Dorsolateral prefrontal cortex (tissue), 120 donors: ENCODE measurements at regions of chr1 and their contacts with region 1.

Region 1: DNA sequence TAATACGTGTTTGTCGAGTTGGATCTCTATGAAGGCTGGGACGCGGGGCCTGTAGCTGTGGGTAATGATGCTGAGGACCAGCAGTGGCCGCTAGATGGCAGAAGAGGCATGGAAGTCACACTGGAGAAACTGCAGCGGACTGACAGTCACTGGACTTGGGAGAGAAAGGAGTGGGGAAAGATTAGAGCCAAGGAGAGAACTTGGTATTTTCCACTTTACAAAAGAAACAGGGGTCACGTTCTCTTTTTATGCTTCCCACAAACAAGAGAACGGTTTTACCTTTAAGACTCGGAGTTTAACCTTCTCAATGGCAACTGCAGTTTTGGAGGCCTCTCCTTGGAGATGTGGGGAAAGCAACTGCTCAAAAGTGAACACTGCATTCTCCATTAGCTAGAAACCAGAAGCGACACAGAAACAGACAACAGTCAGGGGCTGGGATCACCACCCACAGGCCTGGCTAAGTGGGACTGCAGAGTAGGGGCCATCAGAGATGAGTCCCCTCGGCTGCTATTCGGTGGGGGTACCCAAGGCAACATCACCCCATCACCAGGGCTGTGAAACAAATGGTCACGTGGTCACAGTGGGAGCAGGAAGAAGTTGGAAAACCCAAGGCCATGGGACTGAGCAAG is 51.1 kb upstream of the EDEM3 start:
- DNase-seq: peak; percentile 83 to 95 (median 90)
- H3K4me3 ChIP-seq: no peak overlapping the region
- H3K27ac ChIP-seq: peak overlapping the region in 1 of 59 donors; percentile 8
- H3K27me3 ChIP-seq: peaks cover 0 to 4% (median 0%) of the 10 kb centered on the region in 45 donors
- CTCF ChIP-seq: peak; percentile 79 to 99 (median 92)

Region 2: GRCh38 chr1:184973272-184974055 is 167.7 kb after region 1 on chr1:
- intact Hi-C with region 1: loop called in 1 of 2 experiments (anchors 2 kb)
- DNase-seq: peak in 2 of 10 donors; percentile 5 to 8
- H3K4me3 ChIP-seq: peak overlapping the region; percentile 36 to 77 (median 62)
- H3K27ac ChIP-seq: peak overlapping the region in 15 of 59 donors; percentile 4 to 81 (median 31)
- H3K27me3 ChIP-seq: peaks cover 0 to 56% (median 28%) of the 10 kb centered on the region in 45 donors
- CTCF ChIP-seq: no peak

Region 3: GRCh38 chr1:184982002-184982954 is 176.5 kb after region 1 on chr1:
- intact Hi-C with region 1: loop called in 1 of 2 experiments (anchors 1 kb)
- DNase-seq: peak in 8 of 10 donors; percentile 24 to 54 (median 40)
- H3K4me3 ChIP-seq: no peak overlapping the region
- H3K27ac ChIP-seq: no peak overlapping the region
- H3K27me3 ChIP-seq: peaks cover 0 to 20% (median 1%) of the 10 kb centered on the region in 45 donors
- CTCF ChIP-seq: peak; percentile 40 to 87 (median 72)

Region 4: DNA sequence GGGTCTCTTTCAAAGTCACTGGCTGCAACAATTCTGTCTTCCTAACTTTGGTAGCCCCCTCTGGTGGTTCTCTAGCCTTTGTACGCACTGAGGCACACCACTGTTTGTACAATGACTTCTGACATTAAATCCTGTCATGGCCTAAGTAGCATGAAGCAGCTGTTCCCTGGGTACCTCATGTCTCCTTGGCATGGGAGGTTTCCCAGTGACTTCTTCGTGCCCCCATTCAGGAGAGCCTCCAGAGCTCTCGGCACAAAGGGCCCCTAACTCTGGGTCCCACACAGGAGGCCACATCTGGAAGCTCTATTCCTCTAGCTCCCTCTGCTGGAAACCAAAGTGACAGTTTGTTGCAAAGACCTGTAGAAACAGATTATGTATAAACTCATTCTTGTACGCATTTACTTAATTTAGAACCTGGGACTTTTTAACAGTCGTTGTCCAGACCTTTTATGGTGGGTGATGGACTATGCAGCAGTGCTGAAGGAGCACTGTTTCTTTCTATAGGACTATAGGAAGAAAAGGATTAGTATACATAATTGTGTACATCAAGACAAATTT is 364.6 kb after region 1 on chr1:
- intact Hi-C with region 1: loop called (anchors 5 kb)
- DNase-seq: no peak
- H3K4me3 ChIP-seq: no peak overlapping the region
- H3K27ac ChIP-seq: no peak overlapping the region
- H3K27me3 ChIP-seq: no peaks in the 10 kb centered on the region
- CTCF ChIP-seq: peak in 55 of 56 donors; percentile 47 to 80 (median 68)